ENCODE measurements at regions of chr11 and their contacts with region 1.

Region 1: GRCh38 chr11:72831513-72832300 is 17.5 kb downstream of the ATG16L2 start:
- DNase-seq: peak; percentile 83
- H3K4me3 ChIP-seq: no peak overlapping the region
- H3K27ac ChIP-seq: no peak overlapping the region
- H3K4me1 ChIP-seq: peaks cover 0 to 14% (median 9%) of the 10 kb centered on the region in 4 donors
- H3K27me3 ChIP-seq: no peaks in the 10 kb centered on the region
- CTCF ChIP-seq: peak; percentile 93 to 94 (median 94)
- EP300 ChIP-seq: no peak
- POLR2A ChIP-seq: no peak

Region 2: GRCh38 chr11:73242251-73243079 is 410.8 kb after region 1 on chr11:
- in situ Hi-C with region 1: loop called in 1 of 4 experiments (anchors 10 kb)
- intact Hi-C with region 1: no loop called
- DNase-seq: peak; percentile 81
- H3K4me3 ChIP-seq: peak overlapping the region in 1 of 4 donors; percentile 12
- H3K27ac ChIP-seq: no peak overlapping the region
- H3K4me1 ChIP-seq: peaks cover 0 to 4% (median 0%) of the 10 kb centered on the region in 4 donors
- H3K27me3 ChIP-seq: no peaks in the 10 kb centered on the region
- CTCF ChIP-seq: peak; percentile 75 to 89 (median 80)
- EP300 ChIP-seq: no peak
- POLR2A ChIP-seq: no peak

Region 3: DNA sequence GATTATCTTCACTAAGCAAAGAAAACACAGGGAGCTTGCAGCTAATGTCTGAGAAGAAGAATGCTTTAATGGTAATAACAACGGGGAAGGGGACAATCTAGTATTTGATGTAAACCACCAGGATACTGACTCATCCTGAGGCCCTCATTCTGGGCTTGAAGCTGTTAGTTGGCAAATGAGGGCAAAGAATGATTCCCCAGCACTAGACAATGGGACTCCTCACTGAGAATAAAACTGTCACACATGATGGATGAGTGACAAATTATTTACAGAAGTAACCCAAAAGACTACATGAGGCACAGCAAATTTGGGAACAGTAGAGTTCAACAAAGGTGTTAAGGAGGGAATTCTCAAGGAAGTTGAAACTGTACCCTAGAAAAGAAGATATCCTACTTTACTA is 689.9 kb after region 1 on chr11:
- in situ Hi-C with region 1: no loop called
- intact Hi-C with region 1: no loop called
- DNase-seq: no peak
- H3K4me3 ChIP-seq: no peak overlapping the region
- H3K27ac ChIP-seq: no peak overlapping the region
- H3K4me1 ChIP-seq: no peaks in the 10 kb centered on the region
- H3K27me3 ChIP-seq: no peaks in the 10 kb centered on the region
- CTCF ChIP-seq: no peak
- EP300 ChIP-seq: no peak
- POLR2A ChIP-seq: no peak